ENCODE measurements at regions of chr14 and their contacts with region 1.

Region 1: GRCh38 chr14:49620182-49621113 is at the starts of genes MGAT2 and RPL36AL:
- DNase-seq: peak; percentile 99
- H3K4me3 ChIP-seq: peak within 1 kb of the TSS; percentile 88
- H3K27ac ChIP-seq: peak within 1 kb of the TSS; percentile 85
- H3K4me1 ChIP-seq: peaks cover 51% of the 10 kb centered on the region
- CTCF ChIP-seq: peak; percentile 33
- total RNA-seq, gene MGAT2: 79.3 and 83.5 TPM in 2 replicates
- total RNA-seq, gene RPL36AL: 257 and 441 TPM in 2 replicates

Region 2: DNA sequence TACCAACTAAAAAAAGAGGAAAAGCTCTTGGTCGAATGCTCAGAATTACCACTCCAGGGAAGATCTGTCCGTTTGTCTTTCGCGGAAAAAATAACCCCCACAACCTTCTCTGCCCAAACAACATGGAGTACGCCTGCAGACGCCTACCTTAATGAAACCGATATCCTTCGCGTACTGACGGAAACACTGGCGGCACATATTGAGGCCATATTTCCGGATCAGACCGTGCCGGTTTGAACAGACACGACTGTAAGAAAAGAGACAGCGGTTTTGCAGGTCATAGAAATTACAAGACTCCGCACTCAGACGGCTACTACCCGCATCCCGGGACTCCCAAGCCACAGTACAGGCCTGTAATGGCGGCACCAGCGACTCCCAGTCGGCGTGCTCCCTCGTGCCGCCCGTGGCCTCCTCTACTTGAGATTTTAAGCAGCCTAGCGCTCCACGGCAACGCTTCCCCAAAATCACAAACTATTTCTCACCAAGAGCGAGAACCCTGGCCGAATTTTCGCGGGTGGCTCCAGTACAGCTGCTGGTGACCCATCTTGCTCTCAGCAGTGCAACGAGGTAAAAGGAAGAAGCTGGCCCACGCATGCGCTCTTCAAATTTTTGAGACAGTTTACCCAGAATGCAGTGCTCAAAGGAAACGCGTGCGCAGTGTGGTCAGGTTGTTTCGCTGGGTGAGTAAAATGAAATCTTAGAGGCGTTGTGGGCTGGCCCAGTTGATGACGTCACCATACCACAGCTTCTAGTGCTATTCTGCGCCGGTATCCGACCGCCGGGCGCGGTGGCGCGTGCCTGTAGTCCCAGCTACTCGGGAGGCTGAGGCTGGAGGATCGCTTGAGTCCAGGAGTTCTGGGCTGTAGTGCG is 34.4 kb before region 1 on chr14 and contains the start of gene RPS29:
- CTCF ChIA-PET with region 1: interaction called, 3 read pairs
- POLR2A ChIA-PET with region 1: interaction called, 12 read pairs
- intact Hi-C with region 1: loop called (anchors 1 kb)
- DNase-seq: peak; percentile 100
- H3K4me3 ChIP-seq: peak within 1 kb of the TSS; percentile 96
- H3K27ac ChIP-seq: peak within 1 kb of the TSS; percentile 74
- H3K4me1 ChIP-seq: peaks cover 45% of the 10 kb centered on the region
- CTCF ChIP-seq: no peak
- total RNA-seq, gene RPS29: 3,800 and 6,504 TPM in 2 replicates

Region 3: GRCh38 chr14:49598485-49599300 is 21.8 kb before region 1 on chr14 and contains the start of gene LRR1:
- CTCF ChIA-PET with region 1: interaction called, 4 read pairs
- POLR2A ChIA-PET with region 1: interaction called, 30 read pairs
- intact Hi-C with region 1: loop called (anchors 1 kb)
- DNase-seq: peak; percentile 88
- H3K4me3 ChIP-seq: peak within 1 kb of the TSS; percentile 99
- H3K27ac ChIP-seq: peak within 1 kb of the TSS; percentile 94
- H3K4me1 ChIP-seq: peaks cover 40% of the 10 kb centered on the region
- CTCF ChIP-seq: no peak
- total RNA-seq, gene LRR1: 83.4 and 89.8 TPM in 2 replicates

Region 4: DNA sequence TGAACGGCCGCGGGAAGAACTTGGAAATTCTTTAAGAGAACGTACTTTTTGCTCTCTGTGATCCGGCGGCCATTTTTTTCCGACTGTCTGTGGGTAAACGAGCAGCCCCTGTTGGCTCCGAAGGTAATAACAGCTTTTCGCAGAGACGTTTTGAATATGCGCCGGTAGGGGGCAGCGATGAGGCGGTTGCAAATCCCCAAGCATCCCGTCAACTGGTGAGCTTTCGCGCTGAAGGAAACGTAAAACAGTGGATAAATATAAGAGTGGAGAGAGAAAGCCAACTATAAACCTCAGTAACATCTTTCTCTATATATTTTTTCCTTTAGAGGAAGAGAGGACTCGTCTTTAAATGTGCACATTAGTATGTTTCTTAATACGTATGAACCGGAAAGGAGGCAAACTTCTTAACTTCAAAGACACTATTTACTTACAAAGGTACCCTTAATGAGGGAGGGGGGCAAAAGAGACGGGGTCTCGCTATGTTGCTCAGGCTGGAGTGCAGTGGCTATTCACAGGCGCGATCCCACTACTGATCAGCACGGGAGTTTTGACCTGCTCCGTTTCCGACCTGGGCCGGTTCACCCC is 241.7 kb after region 1 on chr14:
- CTCF ChIA-PET with region 1: no interaction called
- POLR2A ChIA-PET with region 1: interaction called, 15 read pairs
- intact Hi-C with region 1: no loop called
- DNase-seq: peak; percentile 89
- H3K4me3 ChIP-seq: peak overlapping the region; percentile 75
- H3K27ac ChIP-seq: peak overlapping the region; percentile 83
- H3K4me1 ChIP-seq: peaks cover 52% of the 10 kb centered on the region
- CTCF ChIP-seq: peak; percentile 100